H1 (cell line): ENCODE measurements at regions of chr3 and their contacts with region 1.

Region 1: GRCh38 chr3:149812606-149813366 is at the start of gene RNF13:
- DNase-seq: peak; percentile 36 to 94
- H3K4me3 ChIP-seq: peak within 1 kb of the TSS; percentile 88 to 95 (median 91)
- H3K27ac ChIP-seq: peak within 1 kb of the TSS; percentile 89
- H3K4me1 ChIP-seq: peaks cover 0 to 7% (median 3%) of the 10 kb centered on the region in 4 experiments; a peak in 4 of 7 replicates
- H3K27me3 ChIP-seq: no peaks in the 10 kb centered on the region
- CTCF ChIP-seq: no peak
- EP300 ChIP-seq: no peak
- POLR2A ChIP-seq: peak; percentile 13 to 67
- RAD21 ChIP-seq: no peak
- total RNA-seq, gene RNF13: 35.4 and 37.1 TPM in 2 replicates

Region 2: DNA sequence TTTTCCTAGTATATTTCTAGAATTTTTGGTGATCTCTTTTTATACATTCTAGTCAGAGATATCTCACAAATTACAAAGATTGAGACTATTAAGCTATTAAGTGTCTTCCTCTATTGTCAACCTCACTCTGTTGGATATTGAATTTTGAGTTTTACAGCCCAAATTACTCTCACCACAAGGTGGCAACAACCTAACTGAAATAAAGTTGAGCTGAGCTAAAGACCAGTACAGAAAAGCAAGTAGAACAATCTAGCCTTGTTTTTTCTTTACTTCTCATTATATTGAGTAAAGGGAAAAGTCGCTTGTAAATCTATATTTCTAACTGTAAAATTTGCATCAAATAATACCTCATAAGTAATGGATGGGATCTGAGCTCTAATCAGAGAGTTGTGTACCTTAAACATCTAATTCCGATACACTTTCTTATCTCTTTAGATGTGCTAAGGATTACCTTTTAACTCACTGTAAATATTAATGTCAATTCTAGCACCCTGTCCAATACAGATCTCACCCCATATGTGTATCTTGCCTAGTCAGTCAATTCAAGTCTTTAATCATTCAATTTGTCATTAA is 46.9 kb before region 1 on chr3:
- CTCF ChIA-PET with region 1: interaction called, 103 read pairs
- POLR2A ChIA-PET with region 1: interaction called, 3 read pairs
- DNase-seq: no peak
- H3K4me3 ChIP-seq: no peak overlapping the region
- H3K27ac ChIP-seq: no peak overlapping the region
- H3K4me1 ChIP-seq: no peaks in the 10 kb centered on the region
- H3K27me3 ChIP-seq: no peaks in the 10 kb centered on the region
- CTCF ChIP-seq: peak in 2 of 3 experiments; percentile 52 to 59; a peak in 2 of 4 replicates
- EP300 ChIP-seq: no peak
- POLR2A ChIP-seq: no peak
- RAD21 ChIP-seq: peak; percentile 53 to 63

Region 3: DNA sequence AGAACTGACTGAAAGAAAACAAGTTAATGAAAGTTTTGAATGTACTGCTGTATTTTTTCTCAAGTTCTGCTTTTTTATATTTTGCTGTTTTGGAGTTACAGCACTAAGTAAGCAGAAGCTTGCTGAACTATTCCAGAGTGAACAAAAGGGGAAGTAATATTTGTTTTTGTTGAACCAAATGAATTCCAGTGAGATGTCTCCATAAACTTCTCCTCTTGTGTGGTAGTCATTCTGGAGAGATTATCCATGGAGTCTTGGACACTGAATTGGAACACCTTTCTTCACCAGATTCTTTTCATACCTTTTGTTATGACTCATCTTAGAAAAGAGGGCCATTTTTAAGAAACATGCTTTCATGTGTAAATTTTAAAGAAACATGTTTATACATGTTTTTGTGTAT is 29.2 kb before region 1 on chr3:
- CTCF ChIA-PET with region 1: interaction called, 103 read pairs
- POLR2A ChIA-PET with region 1: no interaction called
- DNase-seq: no peak
- H3K4me3 ChIP-seq: no peak overlapping the region
- H3K27ac ChIP-seq: no peak overlapping the region
- H3K4me1 ChIP-seq: no peaks in the 10 kb centered on the region
- H3K27me3 ChIP-seq: no peaks in the 10 kb centered on the region
- CTCF ChIP-seq: no peak
- EP300 ChIP-seq: no peak
- POLR2A ChIP-seq: no peak
- RAD21 ChIP-seq: no peak

Region 4: DNA sequence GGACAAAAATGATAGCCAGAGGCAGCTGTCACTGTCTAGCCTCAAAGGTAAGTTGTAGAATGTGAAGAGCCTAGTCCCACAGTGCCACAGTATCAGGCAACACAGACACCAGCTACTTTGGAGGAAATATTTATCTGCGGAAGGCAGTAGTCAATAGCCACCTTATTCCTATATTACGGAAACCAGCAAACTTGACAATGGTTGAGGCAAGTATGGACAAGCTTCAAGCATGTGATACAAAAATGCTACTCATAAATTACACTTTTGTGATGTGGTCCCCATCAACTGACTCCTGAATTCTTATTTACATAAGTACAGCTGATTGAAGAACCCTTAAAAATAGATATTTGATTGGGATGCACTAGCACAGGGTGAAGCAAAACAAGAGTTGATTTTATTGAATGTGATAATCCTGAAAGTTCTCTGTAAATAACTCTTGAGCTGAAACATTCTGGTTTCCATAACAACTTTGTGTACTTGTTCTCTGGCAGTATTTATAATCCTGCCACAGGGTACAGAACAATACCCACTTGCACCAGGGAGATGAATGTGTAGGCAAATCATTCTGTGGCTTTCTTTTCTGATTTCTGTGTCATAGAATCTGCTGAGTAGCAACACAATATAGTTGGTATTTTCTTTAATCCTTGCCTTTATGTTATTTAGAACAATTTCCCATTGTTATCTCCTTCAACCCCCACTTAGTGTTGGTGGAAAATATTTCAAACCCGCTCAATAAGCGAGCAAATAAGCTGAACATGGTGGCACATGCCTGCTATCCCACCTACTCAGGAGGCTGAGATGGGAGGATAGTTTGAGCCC is 20.1 kb before region 1 on chr3 and contains the start of gene ANKUB1:
- CTCF ChIA-PET with region 1: interaction called, 19 read pairs
- POLR2A ChIA-PET with region 1: no interaction called
- DNase-seq: no peak
- H3K4me3 ChIP-seq: no peak within 1 kb of the TSS
- H3K27ac ChIP-seq: no peak within 1 kb of the TSS
- H3K4me1 ChIP-seq: no peaks in the 10 kb centered on the region
- H3K27me3 ChIP-seq: no peaks in the 10 kb centered on the region
- CTCF ChIP-seq: no peak
- EP300 ChIP-seq: no peak
- POLR2A ChIP-seq: no peak
- RAD21 ChIP-seq: no peak
- total RNA-seq, gene ANKUB1: not detected in 2 replicates

Region 5: GRCh38 chr3:150015901-150016300 is 203.1 kb after region 1 on chr3:
- CTCF ChIA-PET with region 1: no interaction called
- POLR2A ChIA-PET with region 1: no interaction called
- DNase-seq: no peak
- H3K4me3 ChIP-seq: no peak overlapping the region
- H3K27ac ChIP-seq: no peak overlapping the region
- H3K4me1 ChIP-seq: no peaks in the 10 kb centered on the region
- H3K27me3 ChIP-seq: no peaks in the 10 kb centered on the region
- CTCF ChIP-seq: no peak
- EP300 ChIP-seq: no peak
- POLR2A ChIP-seq: no peak
- RAD21 ChIP-seq: no peak